ENCODE measurements at regions of chr2 and their contacts with region 1.

Region 1: GRCh38 chr2:224357098-224357901 is 44.6 kb downstream of the FAM124B start:
- DNase-seq: no peak
- ATAC-seq: peak; percentile 70 to 72

Region 2: DNA sequence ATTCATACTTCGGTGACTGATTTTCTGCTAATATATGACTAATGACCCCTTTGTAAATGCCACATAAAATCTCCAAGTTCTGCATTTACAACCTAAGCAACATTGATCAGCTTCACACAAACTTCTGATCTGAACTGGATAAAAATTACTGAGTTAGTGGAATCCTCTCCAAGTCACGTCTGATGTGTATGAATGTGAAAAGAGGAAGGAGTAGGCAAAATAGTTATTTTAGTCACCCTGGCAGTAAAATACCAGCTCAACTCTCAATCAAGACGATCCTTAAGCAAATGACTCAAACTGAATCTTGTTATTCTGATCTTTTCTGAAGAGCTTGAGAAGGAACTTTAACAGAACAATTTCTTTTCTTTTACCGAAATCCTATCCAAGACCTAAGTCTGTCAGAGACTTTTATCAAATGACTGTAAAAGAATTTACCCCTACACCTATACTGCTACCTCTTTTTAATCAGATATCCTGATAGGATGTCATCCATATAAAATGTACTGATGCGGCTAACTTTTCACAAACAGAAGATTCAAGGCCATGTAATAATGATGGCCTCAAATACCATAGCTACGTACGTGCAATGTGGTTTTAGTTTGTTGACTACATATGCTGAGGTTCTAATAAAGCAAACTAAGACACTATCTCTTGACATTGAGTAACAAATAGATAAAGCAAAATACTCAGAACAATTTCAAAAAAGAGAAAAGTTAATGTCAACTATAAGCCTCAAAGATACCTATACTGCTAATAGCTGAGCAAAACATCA is 204.1 kb after region 1 on chr2:
- intact Hi-C with region 1: no loop called
- DNase-seq: no peak
- ATAC-seq: no peak

Region 3: DNA sequence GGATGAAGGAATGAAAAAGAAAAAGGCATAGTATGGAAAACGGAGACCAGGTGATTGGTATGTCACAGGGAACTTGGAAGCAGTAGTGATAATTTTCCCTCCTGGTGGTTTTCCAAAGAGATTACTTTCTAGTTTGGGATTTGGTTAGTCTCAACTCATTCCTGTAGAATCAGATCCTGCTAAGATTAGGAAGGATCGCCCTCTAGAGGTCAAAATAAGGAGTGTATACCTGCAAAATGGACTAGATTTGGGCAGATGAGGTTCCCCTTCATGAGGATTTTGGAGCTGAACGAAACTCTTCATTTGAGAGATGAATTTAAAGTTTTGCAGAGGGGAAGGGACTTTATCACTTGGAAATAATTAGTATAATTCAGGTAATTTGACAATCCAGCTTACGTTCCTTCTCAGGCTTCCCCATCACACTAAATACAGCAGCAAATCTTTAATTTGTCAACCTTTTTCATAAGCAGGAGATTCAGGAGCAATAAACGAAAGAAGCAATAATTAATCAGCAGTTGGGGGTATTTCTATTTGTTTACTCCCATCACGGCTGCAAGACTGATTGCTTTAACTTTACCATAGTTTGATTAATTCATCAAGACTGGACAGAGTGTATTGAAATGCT is 293.6 kb after region 1 on chr2:
- intact Hi-C with region 1: loop called (anchors 1 to 5 kb)
- DNase-seq: no peak
- ATAC-seq: peak; percentile 62 to 78

Region 4: GRCh38 chr2:225660262-225661131 is 1303.2 kb after region 1 on chr2:
- intact Hi-C with region 1: loop called in 1 of 2 experiments (anchors 10 kb)
- DNase-seq: peak; percentile 78
- ATAC-seq: peak; percentile 50 to 60

Measured in left cardiac atrium (tissue), 4 donors.